GM23248 (cell line): ENCODE measurements at regions of chr7 and their contacts with region 1.

Region 1: DNA sequence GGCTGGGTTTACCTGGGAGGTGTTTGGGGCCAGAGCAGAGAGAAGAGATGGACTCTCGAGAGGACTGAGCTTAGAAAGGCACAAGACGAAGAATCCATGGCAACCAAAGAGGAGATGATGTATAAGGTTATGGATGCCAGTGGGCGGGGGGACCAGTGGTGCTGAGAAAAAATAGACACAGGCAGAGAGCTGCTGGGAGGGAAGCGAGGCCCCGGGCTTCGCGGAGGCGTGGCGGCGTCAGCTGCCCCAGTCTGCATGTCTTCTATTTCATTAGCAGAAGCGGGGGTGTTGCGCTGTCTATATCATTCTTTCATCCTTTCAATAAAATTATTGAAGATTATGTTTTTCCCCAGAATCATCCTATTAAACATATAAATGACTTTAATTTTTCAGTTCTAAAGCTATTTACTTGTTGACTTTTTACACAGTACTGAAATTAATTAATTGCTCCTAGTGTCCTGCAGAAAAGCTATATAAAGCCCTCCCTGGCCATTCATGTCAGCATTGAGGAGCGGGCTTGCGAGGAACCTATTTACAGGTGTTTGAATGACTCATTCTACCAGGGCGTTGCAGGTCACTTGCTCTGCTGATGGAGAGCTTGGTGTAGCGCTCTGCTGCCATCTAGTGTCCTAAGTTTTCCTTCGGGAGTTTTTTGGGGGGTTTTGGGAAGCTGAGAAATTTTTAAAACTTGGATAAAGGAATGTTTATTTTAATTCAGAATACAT is 42.9 kb upstream of the BHLHA15 start:
- DNase-seq: peak; percentile 46
- H3K4me3 ChIP-seq: no peak overlapping the region
- H3K27ac ChIP-seq: no peak overlapping the region
- H3K4me1 ChIP-seq: no peaks in the 10 kb centered on the region
- H3K27me3 ChIP-seq: no peaks in the 10 kb centered on the region

Region 2: DNA sequence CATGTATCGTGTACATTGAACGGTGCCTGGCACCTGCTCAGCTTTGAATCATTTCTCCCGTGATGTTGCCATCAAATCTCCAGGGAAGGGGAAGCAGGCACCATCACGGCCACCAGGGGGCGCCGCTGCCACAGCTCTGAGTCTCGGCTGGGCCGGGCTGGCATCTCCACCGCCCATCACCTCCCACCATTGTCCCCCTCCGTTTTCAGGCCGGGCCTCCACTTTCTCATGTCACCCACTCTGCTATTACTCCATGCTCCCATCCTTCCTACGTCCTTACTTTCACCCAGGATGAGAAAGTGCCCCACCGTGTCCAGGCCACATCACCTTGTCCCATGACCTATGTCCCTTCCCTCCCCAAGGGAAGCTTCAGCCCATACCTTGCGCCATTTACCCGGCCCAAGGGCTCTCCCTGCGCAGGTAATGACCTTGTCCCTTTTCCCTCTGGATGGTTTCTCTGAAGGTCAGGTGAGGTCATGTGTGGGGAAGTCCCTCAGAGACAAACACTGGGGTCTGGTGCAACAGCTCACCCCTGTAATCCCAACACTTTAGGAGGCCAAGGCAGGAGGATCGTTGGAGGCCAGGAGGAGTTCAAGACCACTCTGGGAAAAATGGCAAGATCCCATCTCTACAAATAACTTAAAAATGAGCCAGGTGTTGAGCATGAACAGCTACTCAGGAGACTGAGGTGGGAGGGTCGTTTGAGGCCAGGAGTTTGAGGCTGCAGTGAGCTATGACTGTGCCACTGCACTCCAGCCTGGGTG is 146.6 kb before region 1 on chr7:
- in situ Hi-C with region 1: loop called (anchors 10 kb)
- DNase-seq: peak; percentile 79
- H3K4me3 ChIP-seq: no peak overlapping the region
- H3K27ac ChIP-seq: no peak overlapping the region
- H3K4me1 ChIP-seq: no peaks in the 10 kb centered on the region
- H3K27me3 ChIP-seq: no peaks in the 10 kb centered on the region